ENCODE measurements at regions of chr5 and their contacts with region 1.

Region 1: DNA sequence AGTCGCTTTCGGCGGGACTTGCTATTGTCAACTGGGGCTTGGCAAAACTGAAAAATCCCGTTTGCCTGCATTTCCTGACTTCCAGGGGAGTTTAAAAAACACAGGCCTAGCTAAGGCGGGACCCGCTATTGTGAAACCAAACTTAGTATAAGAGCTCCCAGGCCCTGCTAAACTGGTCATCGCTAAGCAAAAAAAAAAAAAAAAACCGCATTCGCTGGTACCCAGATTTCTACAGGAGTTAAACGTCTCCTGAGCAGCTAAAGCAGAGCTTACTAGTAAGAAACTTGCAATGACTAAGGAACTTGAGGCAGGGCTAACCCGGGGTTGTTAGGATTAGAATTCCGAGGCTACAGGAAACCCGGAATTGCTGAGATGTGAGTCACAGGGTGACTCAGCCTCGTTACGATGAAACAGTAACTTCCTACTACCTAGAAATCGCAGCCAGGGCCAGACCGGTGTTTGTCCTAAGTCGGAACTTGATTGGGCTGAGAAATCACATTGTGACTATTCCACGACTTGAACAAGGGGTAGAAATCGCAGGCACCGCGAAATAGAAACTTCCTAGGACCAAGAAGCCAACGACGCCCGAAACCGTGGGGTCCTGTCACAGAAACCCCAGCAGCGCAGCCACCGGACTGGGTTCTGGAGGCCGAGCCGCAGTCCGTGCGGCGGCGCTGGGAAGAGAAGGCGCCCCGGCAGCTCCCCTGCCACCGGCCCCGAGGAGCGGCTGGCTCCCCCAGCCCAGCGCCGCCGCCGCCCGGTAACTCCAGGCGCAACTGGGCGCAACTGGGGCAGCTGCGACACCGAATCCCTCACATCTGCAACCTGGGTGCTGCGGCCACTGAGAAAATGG is 89.5 kb downstream of the ANXA2R start:
- DNase-seq: peak; percentile 85
- ATAC-seq: peak; percentile 60
- H3K4me3 Mint-ChIP-seq: peak overlapping the region; percentile 83
- H3K27ac Mint-ChIP-seq: peak overlapping the region; percentile 99
- H3K4me1 Mint-ChIP-seq: peaks cover 33% of the 10 kb centered on the region
- H3K27me3 Mint-ChIP-seq: no peaks in the 10 kb centered on the region

Region 2: GRCh38 chr5:42791151-42791550 is 159.5 kb before region 1 on chr5:
- CTCF ChIA-PET with region 1: no interaction called
- DNase-seq: no peak
- ATAC-seq: no peak
- H3K4me3 Mint-ChIP-seq: no peak overlapping the region
- H3K27ac Mint-ChIP-seq: no peak overlapping the region
- H3K4me1 Mint-ChIP-seq: no peaks in the 10 kb centered on the region
- H3K27me3 Mint-ChIP-seq: no peaks in the 10 kb centered on the region

Region 3: GRCh38 chr5:42919600-42919999 is 31.1 kb before region 1 on chr5:
- CTCF ChIA-PET with region 1: no interaction called
- DNase-seq: no peak
- ATAC-seq: no peak
- H3K4me3 Mint-ChIP-seq: no peak overlapping the region
- H3K27ac Mint-ChIP-seq: no peak overlapping the region
- H3K4me1 Mint-ChIP-seq: no peaks in the 10 kb centered on the region
- H3K27me3 Mint-ChIP-seq: no peaks in the 10 kb centered on the region

Region 4: DNA sequence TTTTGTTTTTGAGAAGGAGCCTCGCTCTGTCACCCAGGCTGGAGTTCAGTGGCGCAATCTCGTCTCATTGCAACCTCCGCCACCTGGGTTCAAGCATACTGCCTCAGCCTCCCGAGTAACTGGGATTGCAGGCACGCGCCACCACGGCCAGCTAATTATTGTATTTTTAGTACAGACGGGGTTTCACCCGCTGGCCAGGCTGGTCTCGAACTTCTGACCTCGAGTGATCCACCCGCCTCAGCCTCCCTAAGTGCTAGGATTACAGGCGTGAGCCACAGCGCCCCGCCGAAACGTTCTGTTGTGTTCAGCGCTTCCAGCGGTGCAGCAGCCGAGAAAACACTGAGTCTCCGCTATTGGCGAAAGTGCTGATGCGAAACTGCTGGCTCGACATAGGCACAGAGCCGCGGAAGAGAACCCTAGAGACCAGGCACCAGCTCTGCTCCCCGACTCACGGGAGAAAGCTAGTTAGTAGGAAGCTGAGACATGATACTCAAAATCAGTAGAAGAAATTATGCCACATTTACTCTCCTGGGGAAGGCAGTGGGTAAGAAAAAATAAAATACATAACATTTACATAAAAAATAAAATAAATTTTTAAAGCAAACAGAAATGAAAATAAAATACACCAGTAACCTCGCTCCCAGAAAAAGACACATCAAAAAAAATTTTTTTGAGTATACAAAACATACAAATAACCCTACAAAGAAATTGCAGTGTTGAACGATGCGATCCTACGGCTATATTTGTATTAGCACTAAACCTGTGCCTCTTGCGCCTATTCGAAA is 57.9 kb after region 1 on chr5:
- CTCF ChIA-PET with region 1: interaction called, 29 read pairs
- DNase-seq: peak; percentile 95
- ATAC-seq: peak; percentile 65
- H3K4me3 Mint-ChIP-seq: peak overlapping the region; percentile 90
- H3K27ac Mint-ChIP-seq: peak overlapping the region; percentile 97
- H3K4me1 Mint-ChIP-seq: peaks cover 37% of the 10 kb centered on the region
- H3K27me3 Mint-ChIP-seq: peaks cover 2% of the 10 kb centered on the region

Region 5: DNA sequence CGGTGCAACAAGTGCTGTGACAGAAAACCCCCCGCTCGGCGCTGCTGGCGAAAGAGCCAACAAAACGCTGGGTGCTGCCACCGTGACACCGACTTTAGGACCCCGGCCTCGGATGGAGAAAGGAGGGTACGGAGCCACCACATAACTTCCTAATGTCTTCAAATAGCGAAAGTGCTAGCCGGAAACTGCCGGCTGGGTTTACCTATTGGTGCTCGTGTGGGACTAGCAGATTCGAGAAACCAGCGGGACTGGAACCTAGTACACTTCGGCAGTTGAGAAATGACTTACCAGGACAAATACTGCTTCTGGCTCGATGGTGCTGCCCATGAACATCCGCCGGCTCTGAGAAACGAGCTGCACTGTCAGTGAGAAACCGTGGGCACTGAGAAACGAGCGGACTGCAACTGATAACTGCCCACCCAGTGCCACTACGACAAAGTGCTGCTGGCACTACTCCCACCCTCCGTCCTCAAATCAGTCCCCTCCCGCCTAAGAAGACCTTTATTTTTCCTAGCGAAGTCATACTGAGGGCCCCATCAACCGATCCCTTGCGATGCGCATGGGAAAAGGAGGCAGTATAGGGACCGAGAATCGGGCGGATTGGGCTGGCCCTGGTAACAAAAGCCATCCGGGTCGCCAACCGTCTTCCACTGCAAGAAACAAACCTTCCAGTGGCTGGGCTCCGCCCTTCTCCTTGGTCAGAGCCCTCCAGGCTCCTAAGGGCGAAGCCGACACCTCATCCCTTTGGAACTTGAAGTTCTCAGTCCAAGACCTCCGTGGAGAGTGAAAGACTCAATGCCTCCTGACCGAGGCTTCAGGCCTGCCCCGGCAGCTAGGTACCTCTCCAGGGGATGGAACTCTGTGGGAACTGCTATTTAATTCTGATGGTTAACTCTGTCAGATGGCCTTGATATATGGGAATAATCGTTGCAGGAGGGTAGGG is 116.4 kb after region 1 on chr5:
- CTCF ChIA-PET with region 1: interaction called, 15 read pairs
- DNase-seq: peak; percentile 93
- ATAC-seq: peak; percentile 63
- H3K4me3 Mint-ChIP-seq: peak overlapping the region; percentile 99
- H3K27ac Mint-ChIP-seq: peak overlapping the region; percentile 97
- H3K4me1 Mint-ChIP-seq: peaks cover 41% of the 10 kb centered on the region
- H3K27me3 Mint-ChIP-seq: no peaks in the 10 kb centered on the region